ENCODE measurements at regions of chr1 and their contacts with region 1.

Region 1: DNA sequence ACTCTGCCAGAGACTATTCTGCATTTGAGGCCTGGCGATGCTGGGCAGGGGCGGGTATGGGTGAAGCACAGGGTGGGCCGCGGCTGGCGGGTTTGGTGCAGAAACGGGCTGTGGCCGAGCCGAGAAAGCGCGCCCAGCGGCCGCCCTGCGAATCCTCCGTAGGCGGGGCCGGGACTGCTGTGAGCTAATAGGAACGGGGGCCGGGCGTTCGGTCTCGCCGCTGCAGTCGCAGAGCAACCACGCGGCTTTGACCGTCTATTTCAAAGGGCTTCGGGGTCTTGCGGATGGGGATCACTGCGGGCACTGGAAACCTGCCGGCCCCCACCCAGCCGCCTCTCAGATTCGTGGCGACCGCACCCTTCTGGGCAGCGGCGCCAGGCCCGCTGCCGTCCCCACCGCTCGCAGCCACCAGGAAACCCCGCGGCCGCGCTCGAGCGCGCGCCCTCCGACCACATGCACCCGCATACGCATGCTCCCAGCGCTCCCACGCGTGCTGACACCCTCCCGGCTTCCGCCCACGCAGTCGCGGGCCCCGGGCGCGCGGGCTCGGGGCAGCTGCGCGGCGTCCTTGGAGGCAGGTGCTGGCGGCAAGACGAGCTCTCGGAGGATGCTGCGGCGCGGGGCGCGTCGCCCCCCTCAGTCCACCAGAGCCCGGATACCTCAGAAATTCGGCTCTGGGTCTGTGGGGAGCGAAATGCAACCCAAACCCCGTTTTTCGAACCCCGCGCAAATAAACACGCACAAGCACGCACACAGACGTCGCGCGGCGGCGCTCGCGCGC is 32.6 kb downstream of the DNTTIP2 start:
- DNase-seq: peak; percentile 94
- ATAC-seq: peak; percentile 77

Region 2: DNA sequence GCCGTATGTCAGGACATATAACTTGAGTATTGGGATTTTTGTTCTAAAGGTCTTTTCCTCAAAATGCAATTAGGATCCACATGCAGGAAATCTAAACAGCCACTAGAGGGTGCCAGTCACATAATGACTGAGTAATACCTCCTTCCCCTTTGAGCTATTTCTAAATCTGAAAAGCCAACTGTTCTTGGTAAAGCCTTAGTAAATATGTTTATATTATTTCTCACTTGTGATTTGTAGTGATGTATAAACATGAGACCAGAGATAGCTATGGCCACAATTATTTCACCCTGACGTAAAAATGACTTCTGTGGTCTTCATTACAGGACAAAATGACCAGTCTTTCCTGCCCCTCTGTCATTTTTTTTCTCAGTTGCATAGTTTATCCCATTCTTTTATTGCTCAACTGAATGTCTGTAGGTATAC is 541.7 kb before region 1 on chr1:
- intact Hi-C with region 1: loop called (anchors 5 kb)
- DNase-seq: no peak
- ATAC-seq: peak; percentile 58

Region 3: DNA sequence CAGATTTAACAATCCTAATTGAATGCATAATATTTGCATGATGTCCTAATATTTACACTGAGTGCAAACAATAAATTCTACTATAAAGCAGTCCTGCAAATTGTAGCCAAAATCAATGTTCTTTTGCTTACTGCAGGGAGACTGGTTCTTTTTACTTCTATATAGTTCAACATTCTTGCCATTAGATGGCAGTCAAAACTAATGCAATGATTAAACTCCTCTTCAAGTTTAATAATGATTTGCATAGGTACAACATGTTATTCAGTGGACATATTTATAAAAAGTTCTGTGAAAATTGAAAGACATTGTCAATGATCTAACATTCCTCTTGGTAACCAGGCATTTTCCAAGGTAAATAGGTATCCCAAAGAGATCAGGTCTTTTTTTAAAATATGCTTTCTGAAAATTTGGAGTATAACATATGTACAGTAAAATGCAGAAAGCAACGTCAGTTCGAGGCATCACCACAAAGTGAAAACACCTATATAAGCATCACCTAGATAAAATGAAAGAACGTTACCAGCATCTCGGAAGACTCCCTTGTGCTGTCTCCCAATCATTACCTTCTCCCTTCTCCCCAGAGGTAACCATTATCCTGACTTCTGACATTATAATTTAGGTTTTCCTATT is 408.3 kb before region 1 on chr1:
- intact Hi-C with region 1: loop called (anchors 5 kb)
- DNase-seq: no peak
- ATAC-seq: peak; percentile 65

Region 4: DNA sequence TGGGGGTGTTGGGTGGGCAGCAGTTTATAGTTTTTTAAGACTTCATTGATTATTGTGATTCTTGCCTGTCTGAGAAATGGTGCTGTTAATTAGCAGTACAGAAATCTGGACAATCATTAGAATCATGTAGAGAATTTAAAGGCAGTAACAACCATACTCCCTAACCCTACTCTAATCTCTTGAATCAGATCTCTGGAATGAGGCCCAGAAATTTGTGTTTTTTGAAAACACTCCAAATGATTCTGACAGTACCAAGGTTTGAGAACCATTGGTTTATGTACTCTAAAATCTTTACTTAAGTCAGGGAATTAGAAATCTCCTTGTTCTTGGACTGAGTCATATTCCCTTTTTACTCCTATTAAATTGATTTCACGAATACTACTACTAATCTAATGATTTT is 374.5 kb before region 1 on chr1:
- intact Hi-C with region 1: no loop called
- DNase-seq: no peak
- ATAC-seq: peak; percentile 38

Region 5: GRCh38 chr1:93816959-93817678 is 29.3 kb before region 1 on chr1:
- intact Hi-C with region 1: no loop called
- DNase-seq: no peak
- ATAC-seq: peak; percentile 75